PC-9 (cell line): ENCODE measurements at regions of chr20 and their contacts with region 1.

Region 1: GRCh38 chr20:35741892-35742740 is at the start of gene RBM39:
- DNase-seq: peak; percentile 99 to 100
- H3K4me3 ChIP-seq: peak within 1 kb of the TSS; percentile 98
- H3K27ac ChIP-seq: peak within 1 kb of the TSS; percentile 96
- H3K4me1 ChIP-seq: peaks cover 30% of the 10 kb centered on the region
- H3K27me3 ChIP-seq: no peaks in the 10 kb centered on the region
- CTCF ChIP-seq: peak; percentile 50
- total RNA-seq, gene RBM39: 354 and 379 TPM in 2 replicates

Region 2: DNA sequence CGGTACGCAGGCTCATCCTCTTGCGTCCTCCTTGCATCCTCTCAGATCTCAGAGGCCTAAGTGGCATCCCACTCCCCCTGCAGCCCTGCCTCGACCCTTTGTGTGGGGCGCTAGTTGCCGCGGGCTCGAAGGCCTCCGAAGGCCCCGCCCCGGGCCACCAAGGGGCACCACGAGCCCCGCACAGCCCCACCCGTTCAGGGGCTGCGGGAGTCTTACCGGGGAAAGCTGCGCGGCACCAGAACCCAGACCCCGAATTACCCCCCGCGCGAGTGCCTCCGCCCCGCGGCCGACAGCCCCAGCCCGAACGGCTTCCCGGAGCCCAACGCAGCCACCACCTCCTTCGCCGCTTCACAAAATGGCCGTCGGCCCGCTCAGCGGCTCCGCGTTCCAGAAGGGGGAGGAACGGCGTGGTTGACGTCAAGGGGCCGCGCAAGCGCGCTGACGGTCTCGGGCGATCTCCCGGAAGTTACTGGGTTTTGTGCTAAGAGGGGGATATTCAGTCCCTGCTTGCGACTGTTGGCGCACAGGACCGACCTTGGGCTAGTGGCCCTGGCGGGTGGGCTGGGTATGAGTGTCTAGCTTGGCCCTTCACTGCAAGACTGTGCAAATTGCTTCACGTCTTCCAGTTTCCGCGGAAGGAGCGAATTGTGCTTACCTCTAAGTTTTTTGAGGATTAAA is 77.4 kb before region 1 on chr20 and contains the starts of genes CPNE1 and RBM12:
- CTCF ChIA-PET with region 1: interaction called, 4 read pairs
- POLR2A ChIA-PET with region 1: interaction called, 10 read pairs
- intact Hi-C with region 1: loop called (anchors 5 kb)
- DNase-seq: peak; percentile 80 to 94
- H3K4me3 ChIP-seq: peak within 1 kb of the TSS; percentile 99
- H3K27ac ChIP-seq: peak within 1 kb of the TSS; percentile 86
- H3K4me1 ChIP-seq: peaks cover 37% of the 10 kb centered on the region
- H3K27me3 ChIP-seq: no peaks in the 10 kb centered on the region
- CTCF ChIP-seq: no peak
- total RNA-seq, gene CPNE1: 271 and 311 TPM in 2 replicates
- total RNA-seq, gene RBM12: 46.9 and 81.2 TPM in 2 replicates

Region 3: DNA sequence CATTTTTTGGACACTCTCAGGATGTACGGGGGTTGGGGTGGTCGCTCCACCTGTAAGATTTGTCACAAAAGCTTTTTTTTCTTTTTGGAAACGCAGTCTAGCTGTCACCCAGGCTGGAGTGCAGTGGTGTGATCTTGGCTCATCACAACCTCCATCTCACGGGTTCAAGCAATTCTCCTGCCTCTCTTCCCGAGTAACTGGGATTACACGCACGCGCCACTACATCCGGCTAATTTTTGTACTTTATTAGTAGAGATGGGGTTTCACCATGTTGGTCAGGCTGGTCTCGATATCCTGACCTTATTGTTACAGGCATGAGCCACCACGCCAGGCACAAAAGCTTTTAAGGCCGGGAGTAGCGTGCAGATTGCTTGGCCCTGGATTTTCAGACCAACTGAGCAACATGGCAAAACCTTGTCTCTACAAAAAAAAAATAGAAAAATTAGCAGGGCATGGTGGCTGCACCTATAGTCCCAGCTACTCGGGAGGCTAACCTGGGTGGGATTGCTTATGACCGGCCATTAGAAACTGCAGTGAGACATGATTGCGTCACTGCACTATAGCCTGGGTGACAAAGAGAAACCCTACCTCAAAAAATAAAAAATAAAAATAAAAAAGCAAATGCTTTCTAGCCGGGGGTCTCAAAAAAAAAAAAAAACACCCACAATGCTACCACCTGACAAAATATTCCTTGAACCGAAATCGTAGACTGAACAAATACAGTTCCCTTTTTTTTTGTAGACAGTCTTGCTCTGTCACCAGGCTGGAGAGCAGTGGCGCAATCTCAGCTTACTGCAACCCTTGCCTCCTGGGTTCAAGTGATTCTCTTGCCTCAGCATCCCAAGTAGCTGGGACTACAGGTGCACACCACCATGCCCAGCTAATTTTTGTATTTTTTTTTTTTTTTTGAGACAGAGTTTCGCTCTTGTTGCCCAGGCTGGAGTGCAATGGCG is 15.1 kb before region 1 on chr20:
- CTCF ChIA-PET with region 1: no interaction called
- POLR2A ChIA-PET with region 1: interaction called, 18 read pairs
- intact Hi-C with region 1: loop called (anchors 1 kb)
- DNase-seq: no peak
- H3K4me3 ChIP-seq: no peak overlapping the region
- H3K27ac ChIP-seq: no peak overlapping the region
- H3K4me1 ChIP-seq: 0 out of 2 replicates have a peak, but pooled peaks cover 4% of the 10 kb centered on the region
- H3K27me3 ChIP-seq: no peaks in the 10 kb centered on the region
- CTCF ChIP-seq: no peak

Region 4: GRCh38 chr20:35871311-35871771 is 129.2 kb after region 1 on chr20:
- CTCF ChIA-PET with region 1: no interaction called
- POLR2A ChIA-PET with region 1: interaction called, 11 read pairs
- intact Hi-C with region 1: no loop called
- DNase-seq: peak in 1 of 2 experiments; percentile 21
- H3K4me3 ChIP-seq: no peak overlapping the region
- H3K27ac ChIP-seq: no peak overlapping the region
- H3K4me1 ChIP-seq: peaks cover 18% of the 10 kb centered on the region
- H3K27me3 ChIP-seq: no peaks in the 10 kb centered on the region
- CTCF ChIP-seq: no peak

Region 5: GRCh38 chr20:35907017-35907701 is 165.0 kb after region 1 on chr20:
- CTCF ChIA-PET with region 1: interaction called, 11 read pairs
- POLR2A ChIA-PET with region 1: no interaction called
- intact Hi-C with region 1: no loop called
- DNase-seq: no peak
- H3K4me3 ChIP-seq: no peak overlapping the region
- H3K27ac ChIP-seq: no peak overlapping the region
- H3K4me1 ChIP-seq: peaks cover 10% of the 10 kb centered on the region
- H3K27me3 ChIP-seq: no peaks in the 10 kb centered on the region
- CTCF ChIP-seq: no peak

Region 6: DNA sequence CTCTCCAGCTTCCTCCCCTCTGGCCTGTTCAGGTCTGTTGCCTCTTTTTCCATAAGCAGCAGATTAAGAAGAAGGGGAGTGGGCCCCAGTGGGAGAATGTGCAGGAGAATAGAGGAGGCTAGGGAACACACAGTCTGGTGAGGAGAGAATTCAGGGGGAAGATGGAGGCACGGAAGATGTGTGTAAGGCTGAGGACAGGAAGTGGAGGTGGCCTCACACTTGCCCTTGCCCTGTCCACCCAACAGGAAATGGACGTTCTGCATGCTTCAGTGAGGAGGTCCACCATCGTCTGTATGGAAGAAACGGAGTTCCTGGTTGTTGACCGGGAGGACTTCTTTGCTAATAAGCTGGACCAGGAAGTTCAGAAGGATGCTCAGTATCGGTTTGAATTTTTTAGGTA is 242.3 kb after region 1 on chr20:
- CTCF ChIA-PET with region 1: no interaction called
- POLR2A ChIA-PET with region 1: interaction called, 45 read pairs
- intact Hi-C with region 1: no loop called
- DNase-seq: no peak
- H3K4me3 ChIP-seq: no peak overlapping the region
- H3K27ac ChIP-seq: no peak overlapping the region
- H3K4me1 ChIP-seq: no peaks in the 10 kb centered on the region
- H3K27me3 ChIP-seq: no peaks in the 10 kb centered on the region
- CTCF ChIP-seq: no peak